ENCODE measurements at regions of chr5 and their contacts with region 1.

Region 1: DNA sequence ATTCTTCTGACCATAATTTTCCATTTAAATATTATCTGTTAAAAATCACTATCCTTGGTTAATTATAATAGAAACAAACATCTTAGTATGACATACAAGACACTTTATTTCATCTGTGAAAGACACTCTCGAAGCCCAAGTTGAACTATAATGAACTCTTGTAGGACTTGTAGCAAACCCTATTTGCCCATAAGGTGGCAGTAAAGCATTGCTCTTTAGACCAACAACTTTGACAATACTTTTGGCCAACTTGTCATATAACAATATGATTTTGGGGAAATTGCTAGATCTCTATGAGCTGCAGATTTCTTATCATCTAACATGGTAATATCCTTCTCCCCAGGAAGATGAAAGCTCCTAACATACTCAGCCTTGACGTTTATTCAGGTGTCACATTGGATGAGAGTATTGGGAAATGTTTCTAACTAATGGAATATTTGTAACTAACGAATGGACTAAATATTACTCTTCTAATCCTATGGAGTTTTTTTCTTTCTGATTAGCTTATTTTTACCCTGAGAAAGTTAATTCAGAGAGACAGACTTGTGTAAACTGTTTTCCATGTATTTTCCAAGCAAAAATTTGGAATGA is 11.0 kb downstream of the SPINK14 start:
- DNase-seq: peak; percentile 78
- H3K4me3 ChIP-seq: no peak overlapping the region
- H3K27ac ChIP-seq: no peak overlapping the region
- H3K4me1 ChIP-seq: no peaks in the 10 kb centered on the region
- H3K27me3 ChIP-seq: no peaks in the 10 kb centered on the region
- CTCF ChIP-seq: peak; percentile 53 to 56
- POLR2A ChIP-seq: no peak

Region 2: DNA sequence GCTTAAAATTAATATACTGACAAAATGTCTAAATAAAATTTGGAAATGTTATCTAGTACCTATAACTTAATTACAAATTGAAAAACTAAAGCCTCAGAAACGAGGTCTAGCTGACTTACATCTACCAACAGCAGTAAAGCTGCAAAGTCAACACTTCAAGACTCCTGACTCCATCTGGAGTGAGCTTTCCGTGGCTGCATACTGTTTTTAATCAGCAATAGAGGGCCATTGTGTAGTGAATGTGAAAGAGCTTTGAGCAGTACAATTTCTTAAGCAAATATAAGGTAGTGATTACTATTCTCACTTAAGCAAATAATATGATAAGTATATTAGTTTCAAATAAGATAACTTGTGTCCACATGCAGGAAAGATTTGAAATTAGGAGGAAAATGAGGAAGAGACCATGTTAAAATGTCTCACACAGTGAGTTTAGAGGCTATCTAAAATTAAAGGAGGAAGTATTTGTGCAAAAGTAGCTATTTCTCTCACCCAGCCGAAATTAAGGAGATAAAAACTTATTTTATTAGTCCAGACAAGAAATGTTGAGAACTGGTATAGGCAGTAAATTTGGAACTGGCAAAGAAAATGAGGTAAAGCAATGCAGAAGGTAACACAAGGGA is 29.9 kb after region 1 on chr5:
- CTCF ChIA-PET with region 1: no interaction called
- POLR2A ChIA-PET with region 1: no interaction called
- dilution Hi-C with region 1: no loop called
- intact Hi-C with region 1: no loop called
- DNase-seq: no peak
- H3K4me3 ChIP-seq: no peak overlapping the region
- H3K27ac ChIP-seq: no peak overlapping the region
- H3K4me1 ChIP-seq: no peaks in the 10 kb centered on the region
- H3K27me3 ChIP-seq: no peaks in the 10 kb centered on the region
- CTCF ChIP-seq: no peak
- POLR2A ChIP-seq: no peak

Region 3: DNA sequence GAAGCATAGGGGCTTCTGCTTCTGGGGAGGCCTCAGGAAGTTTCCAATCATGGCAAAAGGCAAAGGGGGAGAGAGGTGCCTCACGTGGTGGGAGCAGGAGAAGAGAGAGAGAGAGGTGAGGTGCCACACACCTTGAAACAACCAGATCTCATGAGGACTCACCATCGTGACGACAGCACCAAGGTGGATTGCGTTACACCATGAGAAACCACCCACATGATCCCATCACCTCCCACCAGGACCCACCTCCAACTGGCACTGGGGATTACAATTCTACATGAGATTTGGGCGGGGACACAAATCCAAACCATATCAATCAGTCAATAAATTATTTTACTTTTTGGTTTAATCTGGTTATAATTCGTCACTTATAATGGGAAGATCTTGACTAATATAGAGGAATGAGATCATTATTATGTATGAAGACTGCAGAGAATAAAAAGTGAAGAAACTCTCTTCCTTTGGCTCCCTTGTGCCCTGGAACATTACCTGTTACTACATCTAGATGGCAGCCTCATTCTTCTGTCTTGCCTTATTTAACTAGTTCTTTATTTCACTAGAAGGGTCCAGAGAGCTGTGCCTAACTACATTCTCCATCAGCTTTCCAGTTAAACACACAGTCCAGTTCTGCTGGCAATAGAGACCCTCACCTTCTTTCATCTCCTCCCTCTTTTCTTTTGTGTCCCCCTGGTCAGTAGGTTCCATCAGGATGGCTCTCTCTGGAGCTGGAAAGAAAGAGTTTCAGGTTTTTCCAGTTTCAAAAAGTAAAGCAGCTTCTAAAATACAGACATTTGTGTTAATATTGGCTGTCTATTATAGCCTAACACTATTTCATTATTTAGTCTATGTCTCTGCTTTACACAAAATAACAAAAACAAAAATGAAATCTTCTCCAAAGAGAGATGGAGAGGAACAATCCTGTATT is 111.2 kb after region 1 on chr5:
- CTCF ChIA-PET with region 1: interaction called, 8 read pairs
- POLR2A ChIA-PET with region 1: no interaction called
- dilution Hi-C with region 1: no loop called
- intact Hi-C with region 1: loop called (anchors 2 kb)
- DNase-seq: peak; percentile 36
- H3K4me3 ChIP-seq: no peak overlapping the region
- H3K27ac ChIP-seq: no peak overlapping the region
- H3K4me1 ChIP-seq: no peaks in the 10 kb centered on the region
- H3K27me3 ChIP-seq: no peaks in the 10 kb centered on the region
- CTCF ChIP-seq: peak; percentile 24 to 42
- POLR2A ChIP-seq: no peak

Region 4: DNA sequence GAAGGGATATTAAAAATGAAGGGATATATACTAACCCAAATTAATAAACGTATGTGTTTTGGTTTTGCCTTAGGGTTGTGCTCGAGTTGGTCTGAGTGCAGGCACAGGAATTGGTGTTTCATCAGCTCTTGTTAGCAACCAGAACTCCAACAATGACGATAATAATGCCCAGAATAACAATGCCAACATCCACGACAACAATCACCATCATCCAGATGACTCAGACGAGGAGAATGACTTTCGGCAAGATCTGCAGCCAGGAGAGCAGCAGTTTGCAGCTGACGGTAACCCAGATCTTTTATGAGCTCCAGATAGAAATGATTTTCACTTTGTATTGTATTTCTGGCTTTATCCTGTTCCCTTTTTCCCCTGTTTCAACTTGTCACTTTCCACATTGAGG is 237.6 kb after region 1 on chr5:
- CTCF ChIA-PET with region 1: interaction called, 11 read pairs
- POLR2A ChIA-PET with region 1: no interaction called
- dilution Hi-C with region 1: no loop called
- intact Hi-C with region 1: no loop called
- DNase-seq: peak; percentile 97
- H3K4me3 ChIP-seq: no peak overlapping the region
- H3K27ac ChIP-seq: peak overlapping the region; percentile 92
- H3K4me1 ChIP-seq: peaks cover 14% of the 10 kb centered on the region
- H3K27me3 ChIP-seq: no peaks in the 10 kb centered on the region
- CTCF ChIP-seq: no peak
- POLR2A ChIP-seq: no peak

Region 5: GRCh38 chr5:148532962-148533670 is 353.8 kb after region 1 on chr5:
- CTCF ChIA-PET with region 1: no interaction called
- POLR2A ChIA-PET with region 1: no interaction called
- dilution Hi-C with region 1: no loop called
- intact Hi-C with region 1: no loop called
- DNase-seq: no peak
- H3K4me3 ChIP-seq: no peak overlapping the region
- H3K27ac ChIP-seq: no peak overlapping the region
- H3K4me1 ChIP-seq: no peaks in the 10 kb centered on the region
- H3K27me3 ChIP-seq: no peaks in the 10 kb centered on the region
- CTCF ChIP-seq: no peak
- POLR2A ChIP-seq: no peak

Region 6: GRCh38 chr5:148687427-148687826 is 508.1 kb after region 1 on chr5:
- CTCF ChIA-PET with region 1: no interaction called
- POLR2A ChIA-PET with region 1: no interaction called
- dilution Hi-C with region 1: no loop called
- intact Hi-C with region 1: loop called (anchors 1 kb)
- DNase-seq: peak; percentile 58
- H3K4me3 ChIP-seq: no peak overlapping the region
- H3K27ac ChIP-seq: no peak overlapping the region
- H3K4me1 ChIP-seq: no peaks in the 10 kb centered on the region
- H3K27me3 ChIP-seq: peaks cover 0 to 4% of the 10 kb centered on the region in 2 experiments
- CTCF ChIP-seq: peak; percentile 52 to 66
- POLR2A ChIP-seq: no peak